ENCODE measurements at regions of chr6 and their contacts with region 1.

Region 1: GRCh38 chr6:135586841-135587240 is 89.3 kb upstream of the AHI1 start:
- DNase-seq: peak; percentile 21
- ATAC-seq: peak; percentile 91
- H3K4me3 ChIP-seq: no peak overlapping the region
- H3K27ac ChIP-seq: no peak overlapping the region
- H3K4me1 ChIP-seq: no peaks in the 10 kb centered on the region
- H3K27me3 ChIP-seq: no peaks in the 10 kb centered on the region
- CTCF ChIP-seq: no peak
- EP300 ChIP-seq: peak; percentile 45 to 72; a peak in 2 of 4 replicates
- POLR2A ChIP-seq: no peak
- RAD21 ChIP-seq: no peak

Region 2: DNA sequence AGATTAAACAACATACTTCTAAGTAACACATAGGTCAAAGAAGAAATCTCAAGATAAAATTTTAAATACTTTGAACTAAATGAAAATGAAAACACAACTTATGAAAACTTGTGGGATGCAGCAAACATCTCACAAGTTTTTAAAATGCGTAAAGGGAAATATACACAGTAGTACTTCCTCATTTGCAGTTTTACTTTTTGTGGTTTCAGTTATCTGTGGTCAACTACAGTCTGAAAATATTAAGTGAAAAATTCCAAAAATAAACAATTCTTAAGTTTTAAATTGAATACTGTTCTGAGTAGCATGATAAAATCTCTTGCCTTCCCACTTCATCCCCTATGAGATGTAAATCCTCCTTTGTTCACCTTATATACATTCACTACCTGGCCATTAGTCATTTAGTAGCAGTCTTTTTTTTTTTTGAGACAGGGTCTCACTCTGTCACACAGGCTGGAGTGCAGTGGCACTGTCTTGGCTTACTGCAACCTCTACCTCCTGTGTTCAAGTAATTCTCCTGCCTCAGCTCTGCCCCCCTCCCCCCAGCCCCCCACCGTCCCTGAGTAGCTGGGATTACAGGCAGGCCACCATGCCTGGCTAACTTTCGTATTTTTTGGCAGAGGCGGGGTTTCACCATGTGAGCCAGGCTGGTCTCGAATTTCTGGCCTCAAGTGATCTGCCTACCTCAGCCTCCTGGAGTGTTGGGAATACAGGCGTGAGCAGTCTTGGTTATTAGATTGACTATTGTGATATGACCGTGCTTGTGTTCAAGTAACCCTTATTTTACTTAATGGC is 65.3 kb after region 1 on chr6:
- CTCF ChIA-PET with region 1: interaction called, 3 read pairs
- POLR2A ChIA-PET with region 1: no interaction called
- RAD21 ChIA-PET with region 1: no interaction called
- SMC1A ChIA-PET with region 1: no interaction called
- in situ Hi-C with region 1: no loop called
- intact Hi-C with region 1: loop called (anchors 5 kb)
- DNase-seq: peak; percentile 51
- ATAC-seq: peak; percentile 96
- H3K4me3 ChIP-seq: no peak overlapping the region
- H3K27ac ChIP-seq: 0 out of 2 replicates have a peak overlapping the region, but pooled peaks have one; percentile 9
- H3K4me1 ChIP-seq: peaks cover 11% of the 10 kb centered on the region
- H3K27me3 ChIP-seq: no peaks in the 10 kb centered on the region
- CTCF ChIP-seq: no peak
- EP300 ChIP-seq: peak in 1 of 2 experiments; percentile 48; a peak in 1 of 4 replicates
- POLR2A ChIP-seq: no peak
- RAD21 ChIP-seq: no peak

Region 3: DNA sequence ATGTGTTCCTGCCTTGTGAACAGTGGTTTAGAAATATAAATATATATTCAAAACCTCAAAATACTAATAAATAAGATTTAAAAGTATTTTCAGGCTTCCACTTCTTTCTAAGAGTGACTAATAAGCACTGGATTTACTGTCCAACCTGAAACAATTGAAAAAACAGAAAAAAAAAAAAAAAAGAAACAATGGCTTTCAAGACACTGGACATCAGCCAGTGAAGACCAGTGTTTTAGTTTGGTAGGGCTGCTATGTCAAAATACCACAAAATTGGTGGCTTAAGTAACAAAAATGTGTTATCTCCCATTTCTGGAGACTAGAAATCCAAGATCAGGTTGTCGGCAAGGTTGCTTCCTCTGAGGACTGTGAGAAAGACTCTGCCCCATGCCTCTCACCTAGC is 163.2 kb after region 1 on chr6:
- CTCF ChIA-PET with region 1: no interaction called
- POLR2A ChIA-PET with region 1: no interaction called
- RAD21 ChIA-PET with region 1: no interaction called
- SMC1A ChIA-PET with region 1: no interaction called
- in situ Hi-C with region 1: no loop called
- intact Hi-C with region 1: no loop called
- DNase-seq: no peak
- ATAC-seq: no peak
- H3K4me3 ChIP-seq: no peak overlapping the region
- H3K27ac ChIP-seq: no peak overlapping the region
- H3K4me1 ChIP-seq: no peaks in the 10 kb centered on the region
- H3K27me3 ChIP-seq: no peaks in the 10 kb centered on the region
- CTCF ChIP-seq: no peak
- EP300 ChIP-seq: no peak
- POLR2A ChIP-seq: no peak
- RAD21 ChIP-seq: no peak